Calu3 (cell line): ENCODE measurements at regions of chr2 and their contacts with region 1.

Region 1: DNA sequence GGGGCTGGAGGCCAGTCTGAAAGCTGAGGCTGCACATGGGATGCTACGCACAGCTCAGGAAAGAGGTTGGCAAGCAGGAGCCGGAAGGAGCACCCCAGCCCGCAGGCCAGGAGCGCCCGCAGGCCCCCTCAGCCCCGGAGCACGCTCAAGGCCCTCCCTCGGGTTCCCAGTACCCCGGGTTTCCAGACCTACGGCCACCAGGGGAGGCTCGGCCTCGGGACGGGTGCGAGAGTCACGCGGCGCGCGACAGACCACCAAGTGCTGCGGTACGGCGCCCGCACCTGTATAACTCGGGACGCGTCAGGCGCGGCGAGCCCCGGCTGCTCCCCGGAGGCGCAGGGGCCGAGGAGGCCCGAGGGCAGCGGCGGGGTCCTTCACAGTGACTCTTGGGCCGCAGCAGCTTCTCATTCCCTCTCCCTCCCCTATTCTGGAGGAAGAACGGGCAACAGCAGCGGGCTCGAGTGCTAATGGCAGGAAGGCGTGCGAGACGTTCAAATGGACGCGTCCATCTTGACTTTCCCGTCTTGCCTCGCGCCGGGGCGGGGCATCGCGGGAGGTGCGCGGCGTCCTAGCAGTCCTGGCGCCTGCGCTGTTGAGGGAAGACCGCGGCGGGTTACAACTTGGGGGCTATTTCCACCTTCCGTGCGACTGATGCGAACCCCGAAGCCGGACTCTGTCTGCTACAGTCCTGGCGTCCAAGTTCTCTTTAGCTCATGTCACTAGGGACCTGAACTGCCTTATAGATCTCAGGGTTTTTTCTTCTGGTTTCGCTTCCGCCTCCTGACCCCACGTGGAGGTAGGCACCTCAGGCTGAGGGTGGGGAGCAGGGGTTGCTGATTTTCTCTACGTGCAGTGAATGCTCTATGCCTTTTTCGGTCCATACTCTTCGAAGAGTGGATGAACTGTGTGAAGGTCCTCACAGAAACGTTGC is at the start of gene ANAPC1:
- DNase-seq: peak; percentile 91
- H3K4me3 Mint-ChIP-seq: peak within 1 kb of the TSS; percentile 93
- H3K27ac Mint-ChIP-seq: peak within 1 kb of the TSS; percentile 93
- H3K4me1 Mint-ChIP-seq: no peaks in the 10 kb centered on the region
- H3K27me3 Mint-ChIP-seq: no peaks in the 10 kb centered on the region
- CTCF ChIP-seq: no peak
- total RNA-seq, gene ANAPC1: 64.5 and 67.5 TPM in 2 replicates

Region 2: DNA sequence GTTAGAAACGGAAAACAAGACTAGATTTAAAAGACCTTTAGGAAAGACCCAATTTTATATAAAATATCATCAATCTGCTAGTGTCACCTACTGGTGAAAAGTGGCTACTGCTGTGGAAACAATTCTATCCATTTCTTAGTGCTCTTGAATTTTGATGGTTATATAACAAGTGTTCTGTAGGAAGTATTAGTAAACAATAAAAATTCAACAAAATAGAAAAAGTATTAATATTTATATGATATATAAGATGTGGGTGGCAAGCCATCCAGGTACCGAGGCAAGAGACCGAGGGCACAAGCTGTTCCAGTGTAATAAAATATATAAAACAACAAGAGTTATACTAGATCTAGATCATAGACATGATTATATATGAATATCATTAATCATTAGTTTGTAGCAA is 165.0 kb after region 1 on chr2:
- CTCF ChIA-PET with region 1: interaction called, 8 read pairs
- intact Hi-C with region 1: loop called (anchors 1 kb)
- DNase-seq: peak; percentile 44
- H3K4me3 Mint-ChIP-seq: no peak overlapping the region
- H3K27ac Mint-ChIP-seq: no peak overlapping the region
- H3K4me1 Mint-ChIP-seq: peaks cover 17% of the 10 kb centered on the region
- H3K27me3 Mint-ChIP-seq: peaks cover 5% of the 10 kb centered on the region
- CTCF ChIP-seq: peak; percentile 33

Region 3: DNA sequence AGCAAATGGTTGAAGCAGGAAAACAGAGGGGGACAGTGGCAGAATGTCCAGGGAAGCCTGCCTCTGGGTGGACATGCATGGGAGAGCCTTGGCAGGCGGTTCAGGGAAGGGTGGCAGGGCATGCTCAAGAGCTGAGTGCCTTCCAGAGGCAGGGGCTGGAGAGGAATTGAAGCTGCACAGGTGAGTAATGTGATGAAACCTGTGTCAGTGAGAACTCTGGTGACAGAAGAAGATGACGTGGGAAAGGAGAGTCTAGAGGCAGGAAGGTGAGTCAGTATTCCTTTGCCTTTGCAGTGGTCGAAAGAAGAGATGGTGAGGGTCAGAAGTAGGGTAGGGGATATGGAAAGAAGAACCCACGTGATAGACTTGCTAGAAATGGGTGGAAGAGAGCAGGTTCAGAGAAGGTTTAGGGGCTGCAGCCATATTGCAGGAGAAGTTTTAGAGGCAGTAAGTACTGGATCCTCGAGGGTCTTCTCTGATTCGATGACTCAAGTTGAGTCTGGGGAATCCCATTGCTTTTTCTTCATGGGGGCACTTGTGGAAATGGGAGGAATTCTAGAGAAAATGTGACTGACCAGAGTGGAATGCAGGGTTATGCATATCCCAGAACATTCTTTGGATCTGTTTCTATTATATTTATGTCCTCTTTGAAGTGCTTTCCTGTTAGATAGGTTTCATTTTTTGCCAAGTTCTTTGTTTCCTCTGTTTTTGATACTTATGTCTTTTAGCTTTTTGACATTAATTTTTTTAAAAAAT is 208.5 kb after region 1 on chr2:
- CTCF ChIA-PET with region 1: no interaction called
- intact Hi-C with region 1: no loop called
- DNase-seq: no peak
- H3K4me3 Mint-ChIP-seq: no peak overlapping the region
- H3K27ac Mint-ChIP-seq: no peak overlapping the region
- H3K4me1 Mint-ChIP-seq: peaks cover 13% of the 10 kb centered on the region
- H3K27me3 Mint-ChIP-seq: no peaks in the 10 kb centered on the region
- CTCF ChIP-seq: no peak

Region 4: GRCh38 chr2:112584134-112584890 is 700.4 kb after region 1 on chr2 and contains the start of gene CHCHD5:
- CTCF ChIA-PET with region 1: no interaction called
- intact Hi-C with region 1: loop called (anchors 10 kb)
- DNase-seq: peak; percentile 81
- H3K4me3 Mint-ChIP-seq: peak within 1 kb of the TSS; percentile 83
- H3K27ac Mint-ChIP-seq: peak within 1 kb of the TSS; percentile 96
- H3K4me1 Mint-ChIP-seq: peaks cover 19% of the 10 kb centered on the region
- H3K27me3 Mint-ChIP-seq: no peaks in the 10 kb centered on the region
- CTCF ChIP-seq: no peak
- total RNA-seq, gene CHCHD5: 18.0 and 20.1 TPM in 2 replicates